GM10248 (cell line): ENCODE measurements at regions of chr3 and their contacts with region 1.

Region 1: GRCh38 chr3:172692751-172693338 is 18.0 kb downstream of the NCEH1 start:
- DNase-seq: peak; percentile 27
- CTCF ChIP-seq: no peak

Region 2: DNA sequence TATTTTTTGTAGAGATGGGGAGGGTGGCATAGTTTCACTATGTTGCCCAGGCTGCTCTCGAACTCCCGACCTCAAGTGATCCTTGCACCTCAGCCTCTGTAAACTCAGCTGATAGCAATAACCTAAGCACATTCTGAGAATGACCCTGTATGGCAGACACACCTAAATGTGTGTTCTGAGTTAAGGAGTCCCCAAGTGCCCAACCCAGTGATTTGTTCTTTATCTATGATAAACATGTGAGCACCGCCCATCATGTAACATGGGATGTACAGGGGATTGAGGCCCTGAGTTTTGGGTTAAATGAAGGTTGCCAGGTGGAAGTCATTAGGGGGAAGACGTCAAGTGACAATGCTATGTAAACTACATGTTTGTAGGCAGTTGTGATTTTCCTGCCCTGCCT is 12.3 kb after region 1 on chr3:
- CTCF ChIA-PET with region 1: interaction called, 14 read pairs
- POLR2A ChIA-PET with region 1: no interaction called
- DNase-seq: no peak
- CTCF ChIP-seq: no peak

Region 3: DNA sequence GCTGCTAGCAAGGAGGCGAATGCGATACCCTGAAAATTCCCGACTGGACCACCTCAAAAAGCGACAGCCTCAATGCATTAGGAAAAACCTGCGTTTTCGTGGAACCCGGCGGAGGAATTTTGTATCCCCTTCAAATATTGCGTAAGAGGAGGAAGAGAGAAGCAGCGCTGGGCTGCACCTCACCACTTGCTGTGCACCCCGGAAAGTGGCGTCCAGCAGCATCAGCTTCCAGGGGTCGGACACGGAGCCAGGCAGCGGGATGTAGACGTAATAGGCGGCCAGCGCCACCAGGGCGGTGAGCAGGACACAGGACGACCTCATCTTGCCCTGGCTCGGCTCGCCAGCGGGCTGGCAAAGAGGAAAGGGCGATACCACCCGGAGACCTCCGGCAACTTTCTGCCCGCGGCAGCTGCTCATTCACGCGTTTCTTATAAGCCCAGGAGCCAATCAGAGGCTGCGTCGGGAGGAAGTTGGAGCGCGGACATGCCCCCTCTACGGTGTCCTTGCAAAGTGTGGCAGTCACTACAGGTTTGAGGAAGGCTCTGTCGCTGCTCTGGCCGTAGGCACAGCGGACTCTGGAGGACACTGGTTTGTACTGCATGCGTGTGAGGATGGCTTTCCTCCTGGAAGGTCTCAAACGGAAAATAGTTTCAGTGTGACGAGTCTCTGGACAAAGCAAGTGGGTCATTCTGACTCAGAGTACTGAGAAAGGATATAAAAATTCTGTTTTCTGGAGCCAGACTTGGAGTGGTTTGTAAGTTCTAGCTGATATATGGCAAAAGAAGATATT is 18.0 kb after region 1 on chr3 and contains the start of gene NCEH1:
- CTCF ChIA-PET with region 1: interaction called, 14 read pairs
- POLR2A ChIA-PET with region 1: interaction called, 3 read pairs
- DNase-seq: peak; percentile 91
- CTCF ChIP-seq: peak; percentile 83